ENCODE measurements at regions of chr15 and their contacts with region 1.

Region 1: DNA sequence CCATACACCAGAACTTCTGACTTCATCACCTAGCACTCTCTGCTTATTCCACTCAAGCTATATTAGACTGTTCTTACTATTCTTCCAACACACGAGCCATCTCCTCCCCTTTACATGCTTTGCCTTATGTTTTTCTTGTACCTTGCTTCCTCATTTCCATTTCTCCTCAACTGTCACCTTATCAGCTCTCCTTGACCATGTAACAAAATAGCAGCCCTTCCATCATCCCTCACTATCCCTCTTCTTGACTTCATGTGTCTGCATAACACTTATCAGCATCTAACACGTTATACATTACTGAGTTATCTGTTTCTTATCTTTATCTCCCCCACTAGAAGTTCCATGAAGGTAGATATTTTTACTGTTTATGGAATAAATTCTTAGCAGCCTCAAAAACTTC is 45.3 kb downstream of the TRPM7 start:
- DNase-seq: no peak
- ATAC-seq: no peak
- H3K4me3 ChIP-seq: no peak overlapping the region
- H3K27ac ChIP-seq: no peak overlapping the region
- H3K4me1 ChIP-seq: no peaks in the 10 kb centered on the region
- H3K27me3 ChIP-seq: no peaks in the 10 kb centered on the region

Region 2: DNA sequence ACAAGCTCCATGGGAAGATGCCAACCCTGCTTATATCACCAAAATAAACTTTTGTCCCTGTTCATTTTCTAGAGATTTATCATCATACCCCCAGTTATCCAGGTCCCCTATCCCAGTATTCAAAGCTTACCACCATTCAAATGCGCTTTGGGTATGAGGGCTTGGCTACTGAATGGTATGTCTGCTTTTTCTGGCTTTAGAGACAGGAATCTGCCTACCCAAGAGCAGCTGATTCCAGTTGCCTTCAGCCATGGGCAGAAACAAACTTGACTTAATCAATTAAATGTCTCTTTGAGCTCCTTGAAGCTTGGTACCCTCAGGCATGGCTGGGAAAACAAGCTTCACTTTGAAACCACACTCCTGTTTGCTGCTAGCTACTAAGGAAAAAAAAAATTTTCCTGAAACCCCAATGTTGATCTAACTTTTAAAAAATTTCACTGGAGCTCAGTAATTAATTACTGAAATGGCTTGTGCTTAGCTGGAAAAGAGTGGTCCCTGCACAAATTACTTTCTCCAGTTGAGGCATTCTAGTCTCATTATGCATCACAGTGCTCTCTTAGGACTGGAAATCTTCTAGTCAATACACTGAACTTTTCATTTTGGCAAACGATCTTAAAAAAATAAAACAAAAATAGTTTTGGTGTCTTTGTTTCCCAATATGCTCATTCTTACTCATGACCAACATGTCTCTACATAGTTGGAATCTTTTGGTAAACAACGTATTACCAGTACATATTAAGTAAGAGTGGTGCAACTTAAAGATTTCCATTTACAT is 777.7 kb before region 1 on chr15:
- intact Hi-C with region 1: no loop called
- DNase-seq: no peak
- ATAC-seq: peak in 1 of 2 donors; percentile 39
- H3K4me3 ChIP-seq: no peak overlapping the region
- H3K27ac ChIP-seq: peak overlapping the region; percentile 20
- H3K4me1 ChIP-seq: peaks cover 2% of the 10 kb centered on the region
- H3K27me3 ChIP-seq: no peaks in the 10 kb centered on the region

Region 3: GRCh38 chr15:50590288-50590687 is 51.0 kb before region 1 on chr15:
- intact Hi-C with region 1: loop called in 1 of 4 experiments (anchors 10 kb)
- DNase-seq: no peak
- ATAC-seq: no peak
- H3K4me3 ChIP-seq: no peak overlapping the region
- H3K27ac ChIP-seq: no peak overlapping the region
- H3K4me1 ChIP-seq: no peaks in the 10 kb centered on the region
- H3K27me3 ChIP-seq: no peaks in the 10 kb centered on the region